Right ventricle myocardium inferior (tissue), 1 donor: ENCODE measurements at regions of chr22 and their contacts with region 1.

Region 1: GRCh38 chr22:49852898-49853894 is at the start of gene ZBED4:
- DNase-seq: peak; percentile 99
- ATAC-seq: peak; percentile 97
- total RNA-seq, gene ZBED4: 4.8 TPM

Region 2: DNA sequence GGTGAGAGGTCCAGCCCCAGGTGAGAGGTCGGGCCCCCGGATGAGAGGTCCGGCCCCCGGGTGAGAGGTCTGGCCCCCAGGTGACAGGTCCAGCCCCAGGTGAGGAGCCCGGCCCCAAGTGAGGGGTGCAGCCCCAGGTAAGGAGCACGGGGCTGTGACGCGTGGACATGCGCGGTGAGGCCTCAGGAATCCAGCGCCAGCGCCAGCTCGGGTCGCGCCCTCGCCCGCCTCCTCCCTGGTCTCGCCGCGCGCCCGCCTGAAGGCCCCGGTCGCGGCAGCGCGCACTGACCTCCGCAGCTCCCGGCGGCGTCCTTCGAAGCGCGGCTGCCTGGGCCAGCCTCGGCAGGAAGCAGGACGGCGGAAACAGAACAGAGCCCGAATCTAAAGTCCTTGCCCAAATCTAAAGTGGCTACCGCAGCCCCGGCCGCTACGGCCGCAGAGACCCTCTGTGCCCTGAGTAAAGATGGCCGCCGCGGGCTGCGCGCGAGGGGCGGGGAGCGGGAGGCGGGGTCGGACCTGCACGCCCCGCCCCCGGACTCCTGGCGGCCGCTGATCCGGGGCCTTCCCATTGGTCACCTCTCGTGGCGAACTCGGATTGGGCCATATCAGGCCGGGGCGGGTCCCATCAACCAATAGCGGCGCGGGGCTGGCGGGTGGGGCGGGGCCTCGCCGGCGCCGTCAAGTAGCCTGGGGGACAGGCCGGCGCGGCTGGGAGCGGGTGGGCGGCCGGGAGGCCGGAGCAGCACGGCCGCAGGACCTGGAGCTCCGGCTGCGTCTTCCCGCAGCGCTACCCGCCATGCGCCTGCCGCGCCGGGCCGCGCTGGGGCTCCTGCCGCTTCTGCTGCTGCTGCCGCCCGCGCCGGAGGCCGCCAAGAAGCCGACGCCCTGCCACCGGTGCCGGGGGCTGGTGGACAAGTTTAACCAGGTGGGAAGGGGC is 65.0 kb after region 1 on chr22 and contains the starts of genes ALG12 and CRELD2:
- intact Hi-C with region 1: loop called (anchors 5 kb)
- DNase-seq: peak; percentile 99
- ATAC-seq: peak; percentile 99
- total RNA-seq, gene ALG12: 16.4 TPM
- total RNA-seq, gene CRELD2: 30.6 TPM